GM18951 (cell line): ENCODE measurements at regions of chr6 and their contacts with region 1.

Region 1: GRCh38 chr6:13916230-13916944 is 8.4 kb upstream of the RNF182 start:
- POLR2A ChIP-seq: no peak

Region 2: GRCh38 chr6:14055541-14055940 is 139.2 kb after region 1 on chr6:
- in situ Hi-C with region 1: no loop called
- POLR2A ChIP-seq: no peak

Region 3: DNA sequence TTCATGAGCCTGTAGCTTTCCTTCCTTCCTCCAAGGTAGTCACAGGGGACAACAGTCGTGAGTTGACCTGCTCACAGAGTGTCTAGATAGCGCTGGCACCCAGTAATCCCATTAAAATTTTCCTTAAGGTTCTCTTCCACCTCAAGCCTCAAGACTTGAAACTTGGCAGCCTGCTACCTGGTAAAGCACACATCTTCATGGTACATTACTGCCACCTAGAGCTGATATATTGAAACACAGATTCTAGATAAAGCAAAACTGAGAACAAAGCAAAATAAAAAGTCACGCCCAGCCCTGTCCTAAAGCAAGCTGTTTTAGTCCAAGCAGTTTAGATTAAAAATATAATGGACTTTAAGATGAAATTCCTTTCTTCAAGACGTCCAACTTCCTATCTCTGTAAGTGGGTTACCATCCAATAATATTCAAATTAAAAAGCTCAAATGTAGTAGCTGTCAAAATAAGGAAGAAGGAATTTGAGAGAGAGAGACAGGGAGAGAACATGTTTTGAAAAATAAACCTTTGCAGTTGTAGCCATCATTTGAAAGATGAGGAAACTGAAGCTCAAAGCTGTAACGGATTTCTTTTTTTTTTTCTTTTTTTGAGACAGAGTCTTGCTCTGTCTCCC is 150.5 kb after region 1 on chr6:
- in situ Hi-C with region 1: loop called (anchors 5 kb)
- POLR2A ChIP-seq: no peak

Region 4: GRCh38 chr6:14144678-14145113 is 228.3 kb after region 1 on chr6:
- in situ Hi-C with region 1: loop called (anchors 10 kb)
- POLR2A ChIP-seq: no peak